ENCODE measurements at regions of chr10 and their contacts with region 1.

Region 1: GRCh38 chr10:14185316-14186045 is 145.2 kb downstream of the FRMD4A start:
- DNase-seq: peak; percentile 39
- ATAC-seq: peak; percentile 89
- H3K4me3 Mint-ChIP-seq: peak overlapping the region; percentile 70
- H3K27ac Mint-ChIP-seq: peak overlapping the region; percentile 95
- H3K4me1 Mint-ChIP-seq: peaks cover 15% of the 10 kb centered on the region
- H3K27me3 Mint-ChIP-seq: peaks cover 52% of the 10 kb centered on the region

Region 2: DNA sequence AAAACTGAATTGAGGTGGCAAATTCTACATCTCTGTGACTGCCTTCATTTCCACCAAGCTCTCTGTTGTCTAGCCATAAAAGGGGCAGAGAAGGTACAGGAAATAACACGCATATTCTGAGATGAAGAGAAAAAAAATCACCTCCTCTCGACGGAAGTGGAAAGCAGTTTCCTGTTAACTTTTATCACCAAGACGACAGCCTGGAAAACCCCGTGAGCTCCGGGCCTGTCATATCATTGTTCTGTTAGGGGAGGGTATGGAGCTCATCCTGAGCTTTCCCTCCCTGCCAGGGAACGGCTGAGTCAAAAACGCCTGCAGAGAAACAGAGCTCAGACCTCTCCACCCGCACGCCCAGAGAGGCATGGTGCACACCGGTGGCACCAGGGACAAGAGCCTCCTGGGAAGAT is 398.5 kb before region 1 on chr10:
- POLR2A ChIA-PET with region 1: interaction called, 21 read pairs
- DNase-seq: peak; percentile 60
- ATAC-seq: peak; percentile 86
- H3K4me3 Mint-ChIP-seq: peak overlapping the region; percentile 80
- H3K27ac Mint-ChIP-seq: peak overlapping the region; percentile 94
- H3K4me1 Mint-ChIP-seq: peaks cover 27% of the 10 kb centered on the region
- H3K27me3 Mint-ChIP-seq: no peaks in the 10 kb centered on the region

Region 3: GRCh38 chr10:14162061-14162460 is 23.4 kb before region 1 on chr10:
- POLR2A ChIA-PET with region 1: no interaction called
- DNase-seq: no peak
- ATAC-seq: no peak
- H3K4me3 Mint-ChIP-seq: no peak overlapping the region
- H3K27ac Mint-ChIP-seq: no peak overlapping the region
- H3K4me1 Mint-ChIP-seq: no peaks in the 10 kb centered on the region
- H3K27me3 Mint-ChIP-seq: peaks cover 16% of the 10 kb centered on the region

Region 4: DNA sequence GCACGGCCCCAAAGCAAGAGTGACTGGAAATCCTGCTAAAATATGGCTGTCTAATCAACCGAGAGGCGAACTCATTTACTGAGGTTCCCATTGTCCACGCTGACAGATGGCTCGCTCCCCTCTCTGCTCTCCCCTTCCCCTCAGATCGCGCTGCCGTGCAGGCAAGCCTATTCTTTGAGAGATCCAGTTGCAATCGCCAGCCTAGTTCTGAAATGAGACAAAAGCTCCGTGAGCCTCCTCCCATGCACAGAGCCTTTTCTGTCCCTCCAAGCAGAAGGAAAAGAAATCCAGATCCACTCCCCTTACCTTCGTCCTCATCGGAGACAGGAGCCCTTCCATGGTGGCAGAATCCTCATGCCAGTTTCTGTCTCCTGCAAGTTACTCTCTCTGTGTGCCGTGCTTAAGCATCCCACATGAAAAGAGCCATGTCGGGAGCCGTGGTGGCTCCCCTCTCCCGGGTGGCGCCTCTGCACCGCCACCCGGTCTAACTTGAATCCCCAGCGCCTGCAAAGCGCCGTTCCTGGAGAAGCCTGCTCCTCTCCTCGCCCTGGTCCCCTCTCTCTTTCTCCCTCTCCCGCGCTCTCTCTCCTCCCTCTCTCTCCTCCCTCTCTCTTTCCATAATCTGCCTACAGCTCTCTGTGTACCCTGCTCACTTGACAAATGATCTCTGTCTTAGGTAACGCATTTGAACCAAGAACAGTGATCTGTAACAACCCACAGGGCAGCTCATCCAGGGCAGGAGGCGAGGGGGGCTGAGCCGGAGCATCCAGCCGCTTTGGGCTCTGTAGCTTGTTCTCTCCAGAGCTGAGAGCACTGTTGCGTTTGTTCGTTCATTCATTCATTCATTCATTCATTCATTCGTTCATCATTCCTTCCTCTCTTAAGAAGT is 11.5 kb before region 1 on chr10:
- POLR2A ChIA-PET with region 1: interaction called, 13 read pairs
- DNase-seq: peak; percentile 31
- ATAC-seq: peak; percentile 61
- H3K4me3 Mint-ChIP-seq: peak overlapping the region; percentile 68
- H3K27ac Mint-ChIP-seq: no peak overlapping the region
- H3K4me1 Mint-ChIP-seq: peaks cover 11% of the 10 kb centered on the region
- H3K27me3 Mint-ChIP-seq: peaks cover 80% of the 10 kb centered on the region

Region 5: GRCh38 chr10:14225379-14226150 is 40.1 kb after region 1 on chr10:
- POLR2A ChIA-PET with region 1: no interaction called
- DNase-seq: no peak
- ATAC-seq: no peak
- H3K4me3 Mint-ChIP-seq: no peak overlapping the region
- H3K27ac Mint-ChIP-seq: no peak overlapping the region
- H3K4me1 Mint-ChIP-seq: no peaks in the 10 kb centered on the region
- H3K27me3 Mint-ChIP-seq: peaks cover 9% of the 10 kb centered on the region